ENCODE measurements at regions of chr17 and their contacts with region 1.

Region 1: GRCh38 chr17:80201437-80201836 is 18.7 kb downstream of the SGSH start:
- DNase-seq: no peak
- H3K27ac ChIP-seq: no peak overlapping the region
- CTCF ChIP-seq: no peak

Region 2: DNA sequence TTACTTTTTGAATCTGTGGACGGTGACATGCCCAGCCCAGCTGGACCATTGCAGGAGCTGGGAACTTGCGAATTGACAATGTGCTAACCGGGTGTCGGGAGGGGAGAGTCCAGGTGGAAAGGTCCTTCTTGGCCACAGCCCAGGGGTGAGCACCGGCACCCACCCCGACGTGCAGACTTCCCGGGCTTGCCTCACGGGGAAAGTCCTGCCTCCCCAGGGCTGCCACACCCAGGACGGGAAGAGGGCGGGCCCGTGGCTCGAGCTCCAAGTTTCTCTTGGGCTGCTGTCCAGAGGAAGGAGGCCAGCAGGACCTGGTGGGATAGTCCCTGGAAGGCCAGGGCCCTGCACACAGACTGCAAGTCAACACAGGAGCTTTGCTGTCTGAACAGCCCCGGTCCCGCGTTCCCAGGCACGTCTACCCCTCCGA is 13.9 kb before region 1 on chr17:
- CTCF ChIA-PET with region 1: interaction called, 12 read pairs
- POLR2A ChIA-PET with region 1: interaction called, 18 read pairs
- DNase-seq: peak; percentile 61
- H3K27ac ChIP-seq: peak overlapping the region; percentile 86
- CTCF ChIP-seq: no peak

Measured in RWPE1 (cell line).